Activated CD8-positive, alpha-beta T cell treated with anti-CD3 and anti-CD28 coated beads for 36 hours (primary cell): ENCODE measurements at regions of chr17 and their contacts with region 1.

Region 1: GRCh38 chr17:47720754-47721533 is 12.1 kb upstream of the TBX21 start:
- DNase-seq: peak; percentile 100
- ATAC-seq: peak; percentile 67
- H3K4me3 Mint-ChIP-seq: peak overlapping the region; percentile 62
- H3K27ac Mint-ChIP-seq: peak overlapping the region; percentile 94
- H3K4me1 Mint-ChIP-seq: peaks cover 86% of the 10 kb centered on the region
- H3K27me3 Mint-ChIP-seq: no peaks in the 10 kb centered on the region
- CTCF ChIP-seq: peak; percentile 14

Region 2: DNA sequence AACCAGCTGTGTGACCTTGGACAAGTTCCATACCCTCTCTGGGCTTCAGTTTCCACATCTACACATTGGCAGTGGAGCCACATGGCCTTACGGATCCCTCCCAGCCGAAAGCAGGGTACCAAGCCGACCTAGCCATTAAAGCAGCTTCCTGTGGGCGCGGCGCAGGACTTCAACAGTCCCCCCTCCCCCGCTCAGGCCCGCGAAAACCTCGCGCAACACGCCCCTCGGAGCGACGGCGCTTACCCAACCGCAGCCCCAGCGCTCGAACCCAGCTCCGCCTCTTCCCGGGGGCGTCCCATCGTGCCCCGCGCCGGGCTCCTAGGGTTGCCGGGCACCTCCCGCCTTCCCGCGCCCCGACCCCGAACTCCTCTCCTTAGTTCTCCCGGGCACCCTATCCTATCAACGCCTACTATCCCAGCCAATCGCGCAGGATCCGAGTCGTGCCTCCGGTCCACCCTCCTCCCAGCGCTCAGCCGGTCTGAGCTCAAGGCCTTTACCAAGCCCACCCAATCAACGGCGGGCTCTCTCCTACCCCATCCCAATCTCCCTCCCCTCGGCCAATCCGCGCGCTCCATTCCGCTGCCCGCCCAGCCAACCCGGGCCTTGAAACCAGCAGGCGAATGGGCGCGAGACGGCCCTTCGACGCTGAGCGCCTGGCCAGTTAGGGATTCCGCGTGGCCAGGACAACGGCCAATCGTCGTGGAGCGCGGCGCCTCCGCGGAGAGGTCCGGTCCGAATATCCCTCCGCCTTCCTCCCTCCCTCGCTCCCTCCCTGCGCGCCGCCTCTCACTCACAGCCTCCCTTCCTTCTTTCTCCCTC is 71.6 kb before region 1 on chr17 and contains the start of gene KPNB1:
- CTCF ChIA-PET with region 1: interaction called, 3 read pairs
- POLR2A ChIA-PET with region 1: interaction called, 24 read pairs
- intact Hi-C with region 1: no loop called
- DNase-seq: peak; percentile 99
- ATAC-seq: peak; percentile 84
- H3K4me3 Mint-ChIP-seq: peak within 1 kb of the TSS; percentile 94
- H3K27ac Mint-ChIP-seq: peak within 1 kb of the TSS; percentile 99
- H3K4me1 Mint-ChIP-seq: peaks cover 46% of the 10 kb centered on the region
- H3K27me3 Mint-ChIP-seq: no peaks in the 10 kb centered on the region
- CTCF ChIP-seq: no peak
- total RNA-seq, gene KPNB1: 589 to 605 TPM

Region 3: GRCh38 chr17:47708863-47709541 is 11.9 kb before region 1 on chr17:
- CTCF ChIA-PET with region 1: interaction called, 240 read pairs
- POLR2A ChIA-PET with region 1: interaction called, 493 read pairs
- intact Hi-C with region 1: no loop called
- DNase-seq: no peak
- ATAC-seq: no peak
- H3K4me3 Mint-ChIP-seq: no peak overlapping the region
- H3K27ac Mint-ChIP-seq: no peak overlapping the region
- H3K4me1 Mint-ChIP-seq: peaks cover 74% of the 10 kb centered on the region
- H3K27me3 Mint-ChIP-seq: no peaks in the 10 kb centered on the region
- CTCF ChIP-seq: no peak

Region 4: GRCh38 chr17:47733047-47733673 is 12.2 kb after region 1 on chr17 and contains the start of gene TBX21:
- CTCF ChIA-PET with region 1: interaction called, 40 read pairs
- POLR2A ChIA-PET with region 1: interaction called, 214 read pairs
- intact Hi-C with region 1: loop called (anchors 2 kb)
- DNase-seq: peak; percentile 97
- ATAC-seq: peak; percentile 88
- H3K4me3 Mint-ChIP-seq: peak within 1 kb of the TSS; percentile 91
- H3K27ac Mint-ChIP-seq: peak within 1 kb of the TSS; percentile 97
- H3K4me1 Mint-ChIP-seq: peaks cover 57% of the 10 kb centered on the region
- H3K27me3 Mint-ChIP-seq: no peaks in the 10 kb centered on the region
- CTCF ChIP-seq: peak; percentile 32
- total RNA-seq, gene TBX21: 53.0 to 56.9 TPM

Region 5: GRCh38 chr17:47802341-47803022 is 81.5 kb after region 1 on chr17:
- CTCF ChIA-PET with region 1: no interaction called
- POLR2A ChIA-PET with region 1: no interaction called
- intact Hi-C with region 1: no loop called
- DNase-seq: peak; percentile 71
- ATAC-seq: peak; percentile 98
- H3K4me3 Mint-ChIP-seq: no peak overlapping the region
- H3K27ac Mint-ChIP-seq: no peak overlapping the region
- H3K4me1 Mint-ChIP-seq: no peaks in the 10 kb centered on the region
- H3K27me3 Mint-ChIP-seq: peaks cover 4% of the 10 kb centered on the region
- CTCF ChIP-seq: peak; percentile 84